Esophagus squamous epithelium (tissue), 5 donors: ENCODE measurements at regions of chr17 and their contacts with region 1.

Region 1: GRCh38 chr17:82030470-82031302 is 792 bp upstream of the RAC3 start:
- DNase-seq: no peak
- H3K4me3 ChIP-seq: peak overlapping the region; percentile 47 to 71 (median 60)
- H3K27ac ChIP-seq: peak overlapping the region; percentile 70 to 88 (median 79)
- H3K4me1 ChIP-seq: peaks cover 16 to 51% (median 21%) of the 10 kb centered on the region in 3 donors
- H3K27me3 ChIP-seq: peaks cover 0 to 7% (median 0%) of the 10 kb centered on the region in 4 donors
- CTCF ChIP-seq: peak; percentile 94 to 99 (median 95)
- POLR2A ChIP-seq: no peak

Region 2: DNA sequence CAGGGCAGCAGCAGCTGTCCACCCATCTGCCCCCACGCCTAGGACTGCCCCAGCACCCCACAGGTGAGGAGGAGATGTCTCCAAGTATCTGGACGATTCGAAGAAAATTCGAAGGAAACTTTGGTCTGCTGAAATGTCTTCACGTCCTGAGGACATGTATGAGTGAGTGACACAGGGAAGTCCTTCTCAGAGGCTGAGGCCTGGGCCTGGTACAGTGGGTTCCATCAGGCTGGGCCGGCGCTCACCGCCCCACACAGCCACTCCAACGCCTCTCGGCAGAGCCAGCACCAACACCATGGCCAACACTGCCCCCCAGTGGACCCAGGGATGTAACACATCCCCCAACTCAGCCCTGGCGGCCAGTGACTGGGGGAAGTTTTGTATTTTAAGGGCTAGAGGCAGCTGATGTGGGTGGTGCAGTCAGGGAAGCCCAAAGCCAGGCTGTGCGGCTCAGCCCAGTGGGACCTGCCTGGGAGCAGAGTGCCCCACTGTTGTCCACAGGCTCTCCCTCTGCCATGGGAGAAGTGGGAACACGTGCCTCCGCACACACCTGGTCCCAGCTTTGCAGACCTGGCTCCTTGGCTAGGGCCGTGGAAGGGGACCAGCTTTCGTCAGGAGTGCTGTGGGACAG is 123.2 kb after region 1 on chr17:
- intact Hi-C with region 1: loop called (anchors 2 kb)
- DNase-seq: peak; percentile 31
- H3K4me3 ChIP-seq: no peak overlapping the region
- H3K27ac ChIP-seq: peak overlapping the region in 3 of 4 donors; percentile 47 to 81 (median 75)
- H3K4me1 ChIP-seq: peaks cover 0 to 33% (median 17%) of the 10 kb centered on the region in 3 donors
- H3K27me3 ChIP-seq: no peaks in the 10 kb centered on the region
- CTCF ChIP-seq: peak; percentile 67 to 97 (median 94)
- POLR2A ChIP-seq: no peak